ENCODE measurements at regions of chr15 and their contacts with region 1.

Region 1: DNA sequence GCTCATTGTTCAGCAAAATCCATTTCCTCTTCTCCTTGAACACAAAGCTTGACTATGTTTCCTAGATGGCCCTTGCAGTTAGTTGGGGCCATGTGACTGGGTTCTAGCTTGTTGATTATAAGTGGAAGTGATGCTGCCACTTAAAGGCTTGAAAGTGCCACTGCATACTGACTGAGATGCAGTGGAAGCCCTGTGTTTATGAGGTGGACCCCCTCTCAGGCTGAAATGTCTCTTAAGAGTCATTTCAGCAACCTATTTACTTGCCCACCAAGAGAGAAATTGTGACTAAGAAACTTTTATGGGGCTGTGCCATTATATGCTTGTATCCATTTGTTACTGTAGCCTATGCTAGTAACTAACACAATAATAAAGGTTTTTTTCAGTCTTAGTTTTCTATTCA is 8.4 kb upstream of the ANP32A start:
- DNase-seq: peak in 1 of 4 experiments; percentile 40
- ATAC-seq: peak; percentile 93
- H3K4me3 ChIP-seq: no peak overlapping the region
- H3K27ac ChIP-seq: no peak overlapping the region
- H3K4me1 ChIP-seq: no peaks in the 10 kb centered on the region
- H3K27me3 ChIP-seq: peaks cover 0 to 6% of the 10 kb centered on the region in 2 experiments; a peak in 2 of 5 replicates
- CTCF ChIP-seq: peak; percentile 46 to 60 (median 49)
- EP300 ChIP-seq: no peak
- POLR2A ChIP-seq: no peak
- RAD21 ChIP-seq: peak; percentile 31 to 74; a peak in 3 of 4 replicates

Region 2: DNA sequence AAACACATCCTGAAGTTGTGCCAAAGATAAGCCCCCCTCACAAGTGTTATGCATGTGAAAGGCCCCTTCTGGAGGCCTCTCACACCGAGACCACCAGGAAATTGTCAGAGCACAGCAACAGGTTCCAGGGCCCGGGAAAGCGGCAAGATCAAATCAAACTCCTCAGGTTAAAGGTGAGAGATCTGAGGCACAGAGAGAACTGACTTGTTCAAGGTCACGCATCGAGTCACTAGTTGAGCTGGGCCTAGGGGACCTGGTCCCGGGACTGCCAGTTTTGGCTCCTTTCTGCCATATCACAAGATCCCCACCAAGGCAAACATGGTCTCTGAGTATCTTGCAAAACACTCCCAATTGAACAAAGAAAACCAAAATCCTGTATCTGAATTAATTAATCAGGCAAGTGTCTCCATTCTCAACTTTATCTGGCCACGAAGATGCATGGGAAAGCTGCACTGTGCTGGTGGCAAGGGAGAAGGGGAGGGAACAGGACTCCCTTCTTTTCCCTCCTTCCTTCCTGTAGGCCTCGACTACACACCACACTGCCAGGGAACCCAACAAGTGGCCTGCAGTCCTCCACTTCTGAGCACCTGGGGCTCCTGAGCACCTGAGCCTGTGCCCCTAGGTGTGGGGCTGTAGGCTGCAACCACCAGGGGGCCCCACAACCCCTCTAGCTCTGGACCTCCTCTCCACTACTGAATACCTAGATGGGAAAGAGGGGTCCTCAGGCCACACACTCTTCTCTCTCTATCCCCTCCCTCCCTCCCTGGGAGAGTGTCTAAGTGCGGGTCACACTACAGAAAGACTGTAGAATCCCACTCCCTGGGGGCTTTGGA is 45.6 kb before region 1 on chr15:
- CTCF ChIA-PET with region 1: no interaction called
- POLR2A ChIA-PET with region 1: interaction called, 3 read pairs
- in situ Hi-C with region 1: no loop called
- intact Hi-C with region 1: loop called (anchors 2 kb)
- DNase-seq: peak; percentile 57 to 59 (median 58)
- ATAC-seq: peak; percentile 96
- H3K4me3 ChIP-seq: no peak overlapping the region
- H3K27ac ChIP-seq: no peak overlapping the region
- H3K4me1 ChIP-seq: peaks cover 0 to 3% of the 10 kb centered on the region in 2 experiments; a peak in 1 of 5 replicates
- H3K27me3 ChIP-seq: no peaks in the 10 kb centered on the region
- CTCF ChIP-seq: peak; percentile 63 to 74 (median 65)
- EP300 ChIP-seq: no peak
- POLR2A ChIP-seq: no peak
- RAD21 ChIP-seq: peak; percentile 34 to 69; a peak in 3 of 4 replicates

Region 3: GRCh38 chr15:68817304-68818065 is 11.6 kb before region 1 on chr15:
- CTCF ChIA-PET with region 1: no interaction called
- POLR2A ChIA-PET with region 1: interaction called, 11 read pairs
- in situ Hi-C with region 1: no loop called
- intact Hi-C with region 1: no loop called
- DNase-seq: peak; percentile 59 to 78 (median 62)
- ATAC-seq: peak; percentile 39
- H3K4me3 ChIP-seq: peak overlapping the region; percentile 63
- H3K27ac ChIP-seq: peak overlapping the region; percentile 99
- H3K4me1 ChIP-seq: peaks cover 28 to 31% of the 10 kb centered on the region in 2 experiments
- H3K27me3 ChIP-seq: no peaks in the 10 kb centered on the region
- CTCF ChIP-seq: no peak
- EP300 ChIP-seq: no peak
- POLR2A ChIP-seq: peak; percentile 53
- RAD21 ChIP-seq: no peak

Measured in K562 (cell line).